ENCODE measurements at regions of chr22 and their contacts with region 1.

Region 1: GRCh38 chr22:35627264-35628041 is 10.3 kb upstream of the MB start:
- DNase-seq: peak; percentile 88
- H3K4me3 Mint-ChIP-seq: peak overlapping the region; percentile 77
- H3K27ac Mint-ChIP-seq: peak overlapping the region; percentile 96
- H3K4me1 Mint-ChIP-seq: peaks cover 35% of the 10 kb centered on the region
- H3K27me3 Mint-ChIP-seq: no peaks in the 10 kb centered on the region
- CTCF ChIP-seq: peak; percentile 58

Region 2: DNA sequence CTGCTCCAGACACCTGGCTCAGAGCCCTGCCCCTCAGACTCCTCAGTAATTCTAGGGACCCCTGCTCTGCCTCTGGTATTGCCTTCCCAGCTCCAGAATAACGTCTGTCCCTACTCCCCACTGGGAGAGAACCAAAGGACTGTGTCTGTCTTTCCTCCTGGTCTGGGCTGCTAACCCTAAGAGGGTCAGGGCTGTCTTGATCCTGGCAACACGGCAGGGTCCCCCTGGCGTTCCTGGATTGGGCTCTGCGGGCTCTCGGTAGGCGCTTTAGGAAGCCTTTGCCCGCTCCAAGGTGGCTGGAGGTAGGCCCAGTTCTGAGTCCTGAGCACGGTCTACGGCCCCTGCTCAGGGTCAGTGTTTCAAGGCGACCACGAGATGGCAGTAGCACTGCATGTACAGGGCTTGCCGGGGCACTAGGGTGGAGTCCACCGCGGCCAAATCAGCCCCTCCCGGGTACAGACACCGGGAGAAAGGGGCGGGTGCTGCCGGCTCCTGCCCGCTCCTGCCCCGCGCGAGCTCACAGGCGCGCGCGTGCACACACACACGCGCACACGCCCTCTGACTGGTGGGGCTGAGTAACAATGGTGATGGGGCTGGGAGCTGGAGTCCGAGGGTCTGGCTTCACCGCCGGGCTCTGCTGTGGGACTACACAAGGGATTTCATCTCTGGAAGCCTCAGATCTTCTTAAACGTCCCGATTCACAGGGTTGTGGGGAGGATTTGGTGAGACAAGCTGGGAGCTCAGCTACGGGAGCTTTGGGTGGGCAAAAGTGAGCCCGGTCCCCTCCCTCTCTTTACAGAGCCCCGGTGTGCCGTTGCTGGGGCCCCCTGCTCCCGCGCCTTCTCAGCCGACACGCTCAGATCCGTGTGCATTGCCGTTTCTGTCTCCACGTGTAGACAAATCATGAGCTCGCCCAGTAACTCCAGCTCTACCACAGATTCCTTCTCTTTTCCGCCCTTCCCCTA is 276.6 kb before region 1 on chr22:
- CTCF ChIA-PET with region 1: interaction called, 4 read pairs
- POLR2A ChIA-PET with region 1: no interaction called
- intact Hi-C with region 1: loop called (anchors 1 kb)
- DNase-seq: peak; percentile 91
- H3K4me3 Mint-ChIP-seq: peak overlapping the region; percentile 74
- H3K27ac Mint-ChIP-seq: no peak overlapping the region
- H3K4me1 Mint-ChIP-seq: peaks cover 11% of the 10 kb centered on the region
- H3K27me3 Mint-ChIP-seq: no peaks in the 10 kb centered on the region
- CTCF ChIP-seq: peak; percentile 92

Region 3: GRCh38 chr22:35582861-35583670 is 44.4 kb before region 1 on chr22:
- CTCF ChIA-PET with region 1: interaction called, 12 read pairs
- POLR2A ChIA-PET with region 1: interaction called, 5 read pairs
- intact Hi-C with region 1: loop called (anchors 1 kb)
- DNase-seq: peak; percentile 61
- H3K4me3 Mint-ChIP-seq: no peak overlapping the region
- H3K27ac Mint-ChIP-seq: no peak overlapping the region
- H3K4me1 Mint-ChIP-seq: peaks cover 4% of the 10 kb centered on the region
- H3K27me3 Mint-ChIP-seq: no peaks in the 10 kb centered on the region
- CTCF ChIP-seq: peak; percentile 91

Region 4: DNA sequence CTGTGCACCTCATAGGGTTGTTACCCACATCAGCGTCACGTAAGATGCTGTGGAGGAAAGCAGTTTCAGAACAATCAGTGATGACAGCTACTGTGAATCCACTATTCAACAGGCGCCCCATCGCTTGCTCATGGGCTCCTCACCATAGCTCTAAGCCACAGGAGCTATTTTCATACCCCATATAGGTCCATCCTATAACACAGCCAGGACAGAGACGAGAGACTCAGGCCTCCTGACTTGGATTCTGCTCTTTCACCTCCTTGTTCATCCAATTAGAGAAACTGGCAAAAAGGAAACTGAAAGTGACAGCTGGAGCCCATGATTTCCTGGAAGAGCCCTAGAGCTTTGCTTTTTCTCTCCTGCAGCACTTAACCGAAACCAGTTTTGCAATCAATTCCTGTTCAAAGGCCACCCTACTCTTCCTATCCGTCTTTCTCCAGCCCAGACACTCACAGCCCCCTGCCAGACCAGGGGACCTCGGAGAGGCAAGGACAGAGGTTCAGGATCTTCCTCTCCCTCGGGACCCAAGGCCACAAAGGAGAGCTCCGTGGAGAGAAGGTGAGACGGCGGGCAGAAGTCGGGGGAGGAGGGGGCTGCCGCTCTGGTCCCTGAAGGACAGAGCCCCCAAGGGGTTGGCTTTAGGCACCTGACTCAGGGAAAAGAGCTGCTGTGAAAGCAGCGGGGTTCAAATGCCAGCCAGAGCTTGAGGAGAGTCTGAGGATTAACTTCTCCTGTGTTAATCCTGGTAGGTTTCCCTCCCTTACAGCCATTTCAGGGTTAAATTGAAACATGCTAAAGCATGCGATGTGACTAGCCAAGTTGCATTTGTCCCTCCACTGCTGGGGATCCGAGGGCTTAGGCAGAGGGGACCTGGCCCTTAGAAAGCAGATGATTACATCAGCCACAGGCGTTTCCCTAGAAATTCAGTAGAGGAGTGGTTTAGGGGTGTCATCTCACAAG is 20.9 kb after region 1 on chr22 and contains the start of gene APOL6:
- CTCF ChIA-PET with region 1: interaction called, 19 read pairs
- POLR2A ChIA-PET with region 1: interaction called, 5 read pairs
- intact Hi-C with region 1: no loop called
- DNase-seq: peak; percentile 82
- H3K4me3 Mint-ChIP-seq: peak within 1 kb of the TSS; percentile 94
- H3K27ac Mint-ChIP-seq: peak within 1 kb of the TSS; percentile 98
- H3K4me1 Mint-ChIP-seq: peaks cover 14% of the 10 kb centered on the region
- H3K27me3 Mint-ChIP-seq: no peaks in the 10 kb centered on the region
- CTCF ChIP-seq: no peak
- total RNA-seq, gene APOL6: 7.2 and 9.6 TPM in 2 replicates

Region 5: DNA sequence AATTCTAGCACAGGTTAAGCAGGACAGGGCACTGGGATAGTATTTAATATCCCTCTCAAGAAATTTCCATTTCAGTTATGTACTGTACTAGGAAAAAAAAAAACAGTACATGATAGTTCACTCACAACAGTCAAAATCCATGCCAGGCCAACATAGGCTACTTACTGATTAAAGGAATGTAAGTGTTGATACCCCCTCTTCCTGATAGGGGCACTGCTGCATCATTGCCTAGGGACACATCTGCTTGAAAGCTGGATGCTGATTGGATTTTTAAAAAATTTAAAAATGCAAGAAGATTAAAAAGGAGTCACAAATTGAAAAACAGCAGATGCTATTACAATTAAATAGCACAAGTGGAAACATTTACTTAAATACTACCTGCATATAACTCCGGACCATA is 133.6 kb after region 1 on chr22:
- CTCF ChIA-PET with region 1: interaction called, 3 read pairs
- POLR2A ChIA-PET with region 1: interaction called, 3 read pairs
- intact Hi-C with region 1: loop called (anchors 5 kb)
- DNase-seq: peak; percentile 36
- H3K4me3 Mint-ChIP-seq: no peak overlapping the region
- H3K27ac Mint-ChIP-seq: peak overlapping the region; percentile 23
- H3K4me1 Mint-ChIP-seq: no peaks in the 10 kb centered on the region
- H3K27me3 Mint-ChIP-seq: no peaks in the 10 kb centered on the region
- CTCF ChIP-seq: peak; percentile 34

Region 6: DNA sequence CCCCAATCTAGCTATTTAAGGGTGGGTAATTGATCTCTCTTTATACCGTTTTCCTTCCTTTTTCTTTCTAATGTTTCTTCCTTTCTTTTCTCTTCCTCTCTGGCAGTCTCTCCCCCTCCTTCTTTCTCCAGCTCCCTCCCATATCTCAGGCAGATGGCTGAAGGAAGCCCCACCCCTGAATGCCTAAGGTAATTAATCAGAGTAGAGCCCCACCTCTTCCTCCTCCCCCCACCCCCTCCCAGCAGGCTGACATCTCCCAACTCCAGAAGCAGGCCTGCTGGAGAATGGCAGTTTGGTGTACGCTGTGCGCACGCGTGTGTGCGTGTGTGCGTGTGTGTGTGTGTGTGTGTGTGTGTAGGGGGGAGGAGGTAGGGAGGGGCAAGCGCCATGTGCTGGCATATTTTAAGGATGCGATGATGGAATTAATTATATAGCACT is 212.9 kb after region 1 on chr22:
- CTCF ChIA-PET with region 1: interaction called, 16 read pairs
- POLR2A ChIA-PET with region 1: interaction called, 10 read pairs
- intact Hi-C with region 1: loop called (anchors 1 kb)
- DNase-seq: peak; percentile 97
- H3K4me3 Mint-ChIP-seq: peak overlapping the region; percentile 84
- H3K27ac Mint-ChIP-seq: peak overlapping the region; percentile 83
- H3K4me1 Mint-ChIP-seq: peaks cover 55% of the 10 kb centered on the region
- H3K27me3 Mint-ChIP-seq: no peaks in the 10 kb centered on the region
- CTCF ChIP-seq: no peak

Region 7: DNA sequence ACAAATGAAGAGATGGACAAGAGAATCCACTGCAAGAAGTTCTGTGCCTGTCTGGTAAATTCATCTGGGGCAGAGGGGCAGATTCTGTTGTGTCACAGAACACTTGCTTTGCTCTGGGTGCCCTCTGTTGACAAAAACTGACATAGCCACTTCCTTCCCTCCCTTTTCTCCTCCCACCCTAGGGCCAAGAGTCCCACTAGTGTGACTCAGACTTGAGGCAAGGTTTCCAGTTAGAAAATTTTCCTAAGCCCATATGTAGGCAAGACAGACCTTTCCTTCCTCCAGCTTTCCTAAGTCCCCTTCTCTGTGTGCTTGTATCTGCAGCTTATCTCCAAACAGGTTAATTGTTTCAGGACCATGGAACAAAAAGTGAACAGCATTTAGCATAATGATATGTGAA is 294.3 kb after region 1 on chr22:
- CTCF ChIA-PET with region 1: interaction called, 31 read pairs
- POLR2A ChIA-PET with region 1: interaction called, 6 read pairs
- intact Hi-C with region 1: loop called (anchors 1 kb)
- DNase-seq: peak; percentile 93
- H3K4me3 Mint-ChIP-seq: no peak overlapping the region
- H3K27ac Mint-ChIP-seq: no peak overlapping the region
- H3K4me1 Mint-ChIP-seq: peaks cover 27% of the 10 kb centered on the region
- H3K27me3 Mint-ChIP-seq: no peaks in the 10 kb centered on the region
- CTCF ChIP-seq: peak; percentile 72

Measured in MCF 10A (cell line).